ENCODE measurements at regions of chr11 and their contacts with region 1.

Region 1: GRCh38 chr11:128238521-128239265 is 348.7 kb downstream of the ETS1 start:
- DNase-seq: no peak
- ATAC-seq: peak; percentile 94
- H3K4me3 Mint-ChIP-seq: peak overlapping the region; percentile 39
- H3K27ac Mint-ChIP-seq: peak overlapping the region; percentile 84
- H3K4me1 Mint-ChIP-seq: peaks cover 34% of the 10 kb centered on the region
- H3K27me3 Mint-ChIP-seq: no peaks in the 10 kb centered on the region

Region 2: DNA sequence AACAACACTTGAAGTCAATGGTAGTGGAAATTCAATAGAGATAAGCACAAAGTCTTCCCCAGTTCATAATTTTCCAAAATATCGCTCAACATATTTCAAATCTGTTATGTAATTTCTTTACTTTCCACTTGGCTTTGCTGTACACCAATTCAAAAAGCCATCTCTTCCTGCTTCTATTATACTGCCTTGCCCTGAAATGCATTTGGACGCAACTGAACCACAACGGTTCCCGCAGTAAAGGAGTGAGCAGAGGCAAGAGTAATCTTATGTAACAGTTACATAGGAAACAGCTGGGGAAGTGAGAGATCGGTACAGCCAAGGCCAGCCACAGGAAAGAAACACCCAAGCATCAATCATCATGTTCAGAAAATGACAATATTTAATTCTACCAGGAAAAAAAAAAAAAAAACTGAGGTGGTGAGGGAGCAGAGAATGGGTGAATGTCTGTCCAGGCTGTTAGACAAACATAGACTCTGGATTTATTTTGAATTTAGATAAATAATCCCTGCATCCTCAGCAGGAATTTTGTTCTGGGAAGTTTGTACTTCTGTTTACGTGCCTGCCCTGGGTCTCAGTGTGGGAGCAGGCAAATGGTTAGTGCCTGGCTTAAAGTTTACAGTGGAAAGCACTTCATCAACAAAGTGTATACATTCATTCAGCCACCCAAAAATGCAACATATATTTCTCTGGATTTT is 43.5 kb before region 1 on chr11:
- CTCF ChIA-PET with region 1: no interaction called
- POLR2A ChIA-PET with region 1: no interaction called
- intact Hi-C with region 1: loop called in 1 of 2 experiments (anchors 2 kb)
- DNase-seq: peak; percentile 63
- ATAC-seq: peak; percentile 73
- H3K4me3 Mint-ChIP-seq: peak overlapping the region; percentile 10
- H3K27ac Mint-ChIP-seq: no peak overlapping the region
- H3K4me1 Mint-ChIP-seq: peaks cover 39% of the 10 kb centered on the region
- H3K27me3 Mint-ChIP-seq: no peaks in the 10 kb centered on the region

Region 3: GRCh38 chr11:128226106-128226716 is 12.5 kb before region 1 on chr11:
- CTCF ChIA-PET with region 1: no interaction called
- POLR2A ChIA-PET with region 1: no interaction called
- intact Hi-C with region 1: loop called in 1 of 2 experiments (anchors 1 kb)
- DNase-seq: peak; percentile 62
- ATAC-seq: peak; percentile 54
- H3K4me3 Mint-ChIP-seq: no peak overlapping the region
- H3K27ac Mint-ChIP-seq: peak overlapping the region; percentile 55
- H3K4me1 Mint-ChIP-seq: peaks cover 52% of the 10 kb centered on the region
- H3K27me3 Mint-ChIP-seq: no peaks in the 10 kb centered on the region

Region 4: DNA sequence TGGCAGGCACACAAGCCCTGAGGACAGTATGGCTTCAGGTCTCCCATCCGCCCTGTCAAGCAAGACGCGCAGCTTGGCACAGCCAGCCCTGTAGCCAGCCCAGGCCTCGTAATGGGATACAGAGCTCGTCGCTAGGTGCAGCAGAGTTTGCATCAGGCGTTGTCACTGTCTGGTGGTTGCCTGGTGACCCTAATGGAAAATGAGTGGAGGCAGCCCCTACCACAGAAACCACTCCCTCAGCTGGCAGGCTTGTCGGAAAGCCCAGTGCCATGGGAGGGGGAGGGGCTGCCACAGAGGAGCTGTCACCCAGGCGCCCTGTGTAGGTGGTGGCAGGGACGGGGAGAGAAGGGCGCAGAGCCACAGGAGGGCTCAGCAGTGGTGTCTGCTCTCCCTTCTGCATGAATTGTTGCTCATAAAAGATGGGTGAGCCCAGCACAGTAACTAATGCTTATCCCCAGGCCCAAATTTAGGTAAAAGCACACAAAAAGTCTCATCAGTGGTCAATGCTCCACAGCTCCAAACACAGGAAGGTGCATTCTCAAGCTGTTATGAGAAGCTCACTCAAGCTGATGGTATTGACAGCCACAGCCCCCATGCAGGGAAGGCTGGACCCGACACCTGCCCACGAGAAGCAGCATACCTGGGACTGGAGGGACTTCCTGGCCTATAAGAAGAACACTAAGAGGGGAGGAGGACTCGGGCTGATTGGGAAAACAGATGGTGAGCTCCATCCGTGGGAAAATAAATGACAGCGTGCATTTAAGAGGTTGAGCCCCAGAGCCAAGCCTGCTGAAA is 184.1 kb after region 1 on chr11:
- CTCF ChIA-PET with region 1: no interaction called
- POLR2A ChIA-PET with region 1: interaction called, 3 read pairs
- intact Hi-C with region 1: loop called in 1 of 2 experiments (anchors 2 kb)
- DNase-seq: peak; percentile 97
- ATAC-seq: peak; percentile 94
- H3K4me3 Mint-ChIP-seq: peak overlapping the region; percentile 36
- H3K27ac Mint-ChIP-seq: peak overlapping the region; percentile 82
- H3K4me1 Mint-ChIP-seq: peaks cover 53% of the 10 kb centered on the region
- H3K27me3 Mint-ChIP-seq: no peaks in the 10 kb centered on the region

Region 5: DNA sequence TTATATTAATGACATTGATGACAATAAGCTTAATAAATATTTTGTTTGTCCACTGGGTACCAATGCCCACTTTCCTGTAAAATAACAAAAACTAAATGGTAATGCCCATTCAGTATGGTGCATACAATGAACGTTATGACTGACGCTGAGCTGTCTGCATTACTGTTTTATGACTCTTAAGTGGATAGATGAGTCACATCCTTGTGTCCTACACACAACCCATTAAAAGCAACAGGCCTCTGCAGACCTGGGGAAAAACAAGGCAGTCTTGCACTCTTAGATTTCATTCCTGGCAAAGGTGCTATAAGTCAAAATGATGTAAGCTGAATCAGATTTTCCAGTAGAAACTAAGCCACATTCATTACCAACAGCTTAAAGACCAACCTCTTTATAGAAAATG is 1400.6 kb after region 1 on chr11:
- CTCF ChIA-PET with region 1: no interaction called
- POLR2A ChIA-PET with region 1: no interaction called
- intact Hi-C with region 1: loop called in 1 of 2 experiments (anchors 10 kb)
- DNase-seq: peak; percentile 66
- ATAC-seq: peak; percentile 81
- H3K4me3 Mint-ChIP-seq: no peak overlapping the region
- H3K27ac Mint-ChIP-seq: peak overlapping the region; percentile 72
- H3K4me1 Mint-ChIP-seq: peaks cover 75% of the 10 kb centered on the region
- H3K27me3 Mint-ChIP-seq: peaks cover 3% of the 10 kb centered on the region

Measured in activated CD4-positive, alpha-beta T cell treated with anti-CD3 and anti-CD28 coated beads for 36 hours (primary cell).